AG04450 (cell line): ENCODE measurements at regions of chr5 and their contacts with region 1.

Region 1: DNA sequence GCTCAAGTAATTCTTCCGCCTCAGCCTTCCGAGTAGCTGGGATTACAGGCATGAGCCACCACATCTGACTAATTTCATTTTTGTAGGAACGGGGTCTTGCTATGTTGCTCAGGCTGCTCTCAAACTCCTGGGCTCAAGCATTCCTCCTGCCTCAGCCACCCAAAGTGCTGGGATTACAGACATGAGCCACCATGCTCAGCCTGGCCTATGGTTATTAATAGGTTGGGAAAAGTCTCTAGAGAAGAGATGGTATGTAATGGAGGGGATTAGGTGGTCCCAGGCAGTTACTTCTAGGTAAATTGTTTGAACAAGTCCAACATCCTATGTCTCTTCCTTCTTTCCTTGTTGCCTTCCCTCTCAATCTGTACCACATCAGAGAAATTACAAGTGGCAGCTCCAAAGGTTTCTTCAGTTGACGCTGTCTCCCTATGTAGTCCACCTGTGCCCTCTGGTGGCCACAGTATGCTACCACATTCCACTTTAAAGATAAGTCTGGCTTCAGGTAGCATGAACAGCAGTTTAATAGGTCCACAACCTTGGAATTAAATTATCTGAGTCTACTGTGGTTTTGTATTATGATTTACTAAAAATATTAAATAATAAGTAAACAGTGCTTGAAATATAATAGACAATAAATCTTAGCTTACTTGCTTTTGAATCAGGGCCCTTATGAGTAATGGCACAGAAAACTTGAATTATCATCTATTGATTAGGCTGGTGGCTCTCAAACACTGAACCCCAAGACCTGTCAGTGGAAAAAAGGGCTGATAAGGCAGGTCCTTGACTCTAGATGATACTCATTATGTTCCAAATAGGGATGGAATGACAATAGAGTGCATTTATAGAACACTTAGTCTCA is 9.7 kb downstream of the TIGD6 start:
- DNase-seq: peak; percentile 56
- H3K4me3 ChIP-seq: no peak overlapping the region
- H3K27ac ChIP-seq: no peak overlapping the region
- H3K27me3 ChIP-seq: no peaks in the 10 kb centered on the region
- CTCF ChIP-seq: peak; percentile 98

Region 2: DNA sequence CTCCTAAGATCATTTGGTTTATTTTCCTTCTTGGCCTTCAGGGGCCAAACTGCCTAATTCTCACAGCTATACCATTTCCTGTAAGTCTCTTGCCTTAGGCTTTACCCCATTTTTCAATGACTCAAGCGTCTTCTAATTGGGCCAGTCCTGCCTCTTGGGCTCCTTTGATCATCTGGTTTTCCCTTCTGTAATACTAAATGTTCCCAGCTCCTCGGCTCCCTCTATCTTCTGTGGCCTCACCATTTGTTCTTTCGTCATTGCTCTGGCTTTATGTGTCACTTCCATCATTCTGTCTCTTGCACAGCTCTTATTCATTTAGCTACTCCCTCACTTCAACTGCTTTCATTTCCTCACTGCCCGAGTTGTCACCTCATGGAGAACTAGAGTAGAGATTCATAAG is 1693.0 kb before region 1 on chr5:
- CTCF ChIA-PET with region 1: no interaction called
- POLR2A ChIA-PET with region 1: no interaction called
- DNase-seq: no peak
- H3K4me3 ChIP-seq: no peak overlapping the region
- H3K27ac ChIP-seq: no peak overlapping the region
- H3K27me3 ChIP-seq: no peaks in the 10 kb centered on the region
- CTCF ChIP-seq: no peak

Region 3: GRCh38 chr5:149979896-149980295 is 10.9 kb before region 1 on chr5:
- CTCF ChIA-PET with region 1: interaction called, 25 read pairs
- POLR2A ChIA-PET with region 1: no interaction called
- DNase-seq: no peak
- H3K4me3 ChIP-seq: no peak overlapping the region
- H3K27ac ChIP-seq: no peak overlapping the region
- H3K27me3 ChIP-seq: no peaks in the 10 kb centered on the region
- CTCF ChIP-seq: no peak

Region 4: GRCh38 chr5:150006318-150006717 is 15.6 kb after region 1 on chr5:
- CTCF ChIA-PET with region 1: interaction called, 13 read pairs
- POLR2A ChIA-PET with region 1: no interaction called
- DNase-seq: no peak
- H3K4me3 ChIP-seq: no peak overlapping the region
- H3K27ac ChIP-seq: no peak overlapping the region
- H3K27me3 ChIP-seq: no peaks in the 10 kb centered on the region
- CTCF ChIP-seq: no peak

Region 5: GRCh38 chr5:150112261-150113046 is 121.7 kb after region 1 on chr5:
- CTCF ChIA-PET with region 1: no interaction called
- POLR2A ChIA-PET with region 1: no interaction called
- DNase-seq: peak; percentile 32
- H3K4me3 ChIP-seq: no peak overlapping the region
- H3K27ac ChIP-seq: peak overlapping the region; percentile 78
- H3K27me3 ChIP-seq: no peaks in the 10 kb centered on the region
- CTCF ChIP-seq: no peak